ENCODE measurements at regions of chr17 and their contacts with region 1.

Region 1: DNA sequence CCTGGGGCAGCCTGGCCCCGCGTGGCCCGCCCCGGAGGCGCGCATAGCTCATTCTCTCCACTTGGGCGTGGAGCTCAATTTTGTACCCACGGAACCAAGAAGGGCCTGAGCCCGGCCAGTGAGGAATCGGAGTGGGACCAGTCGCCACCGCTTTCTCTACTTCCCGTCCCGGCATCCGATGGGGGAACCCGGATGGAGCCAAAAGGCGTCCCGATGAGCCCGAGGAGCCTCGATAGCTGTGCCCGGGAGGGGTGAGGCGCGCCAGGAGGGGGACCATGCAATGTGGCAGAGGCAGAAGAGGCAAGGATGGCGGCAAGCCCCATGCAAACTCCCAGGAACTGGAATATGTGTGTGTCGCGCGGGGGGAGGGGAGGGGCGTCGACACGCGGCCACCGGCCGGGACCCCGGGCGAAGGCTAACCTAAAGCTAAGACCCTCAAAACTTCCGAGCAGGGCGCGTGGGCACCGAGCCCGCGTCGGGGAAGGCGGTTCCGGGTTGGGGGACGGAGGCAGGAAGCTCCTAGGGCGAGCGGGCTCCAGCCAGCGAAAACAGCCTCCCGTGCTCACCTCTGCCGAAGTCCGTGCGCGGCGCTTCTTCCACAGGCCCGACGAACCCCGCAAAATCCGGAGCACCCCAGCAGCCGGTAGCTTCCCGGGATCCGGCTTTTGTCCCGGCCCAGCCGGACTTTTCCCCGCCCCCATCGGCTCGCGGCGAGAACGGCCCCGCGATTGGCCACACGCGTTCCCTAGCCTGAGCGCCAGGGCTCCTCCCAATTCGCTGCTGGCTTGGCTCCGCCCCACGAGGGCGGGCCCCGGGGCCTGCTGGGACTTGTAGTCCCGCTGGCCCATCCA is at the start of gene ACLY:
- DNase-seq: peak; percentile 88 to 99 (median 92)
- ATAC-seq: peak; percentile 100
- H3K4me3 ChIP-seq: peak within 1 kb of the TSS; percentile 94
- H3K4me3 Mint-ChIP-seq: peak within 1 kb of the TSS; percentile 84 to 99 (median 89)
- H3K27ac ChIP-seq: peak within 1 kb of the TSS; percentile 79
- H3K27ac Mint-ChIP-seq: peak within 1 kb of the TSS; percentile 48 to 97 (median 78)
- H3K4me1 ChIP-seq: peaks cover 8 to 14% of the 10 kb centered on the region in 2 donors
- H3K4me1 Mint-ChIP-seq: peaks cover 29 to 48% (median 35%) of the 10 kb centered on the region in 7 donors
- H3K27me3 ChIP-seq: no peaks in the 10 kb centered on the region
- H3K27me3 Mint-ChIP-seq: no peaks in the 10 kb centered on the region
- total RNA-seq, gene ACLY: 59.2 to 154 (median 70.8) TPM

Region 2: GRCh38 chr17:41930009-41930832 is 11.7 kb after region 1 on chr17 and contains the start of gene ODAD4:
- CTCF ChIA-PET with region 1: interaction called, 9 read pairs
- POLR2A ChIA-PET with region 1: interaction called, 47 read pairs
- intact Hi-C with region 1: loop called (anchors 1 kb)
- DNase-seq: peak; percentile 87 to 98 (median 97)
- ATAC-seq: peak; percentile 98
- H3K4me3 ChIP-seq: peak within 1 kb of the TSS; percentile 79
- H3K4me3 Mint-ChIP-seq: peak within 1 kb of the TSS; percentile 93 to 100 (median 96)
- H3K27ac ChIP-seq: peak within 1 kb of the TSS; percentile 84
- H3K27ac Mint-ChIP-seq: peak within 1 kb of the TSS; percentile 90 to 100 (median 96)
- H3K4me1 ChIP-seq: peaks cover 9 to 11% of the 10 kb centered on the region in 2 donors
- H3K4me1 Mint-ChIP-seq: peaks cover 18 to 52% (median 24%) of the 10 kb centered on the region in 7 donors
- H3K27me3 ChIP-seq: no peaks in the 10 kb centered on the region
- H3K27me3 Mint-ChIP-seq: no peaks in the 10 kb centered on the region
- total RNA-seq, gene ODAD4: 0.16 to 4.1 (median 1.6) TPM in 4 of 5 experiments, not detected in the other